CD8-positive, alpha-beta T cell (primary cell): ENCODE measurements at regions of chr1 and their contacts with region 1.

Region 1: GRCh38 chr1:226736908-226737818 is 1.9 kb downstream of the ITPKB start:
- DNase-seq: peak in 8 of 9 experiments; percentile 26 to 77 (median 61)
- ATAC-seq: peak; percentile 14
- H3K4me3 ChIP-seq: peak overlapping the region; percentile 99
- H3K4me3 Mint-ChIP-seq: peak overlapping the region; percentile 94
- H3K27ac ChIP-seq: peak overlapping the region; percentile 88 to 98
- H3K27ac Mint-ChIP-seq: peak overlapping the region; percentile 94
- H3K4me1 ChIP-seq: peaks cover 36% of the 10 kb centered on the region
- H3K4me1 Mint-ChIP-seq: peaks cover 44% of the 10 kb centered on the region
- H3K27me3 ChIP-seq: no peaks in the 10 kb centered on the region
- H3K27me3 Mint-ChIP-seq: no peaks in the 10 kb centered on the region
- CTCF ChIP-seq: no peak

Region 2: GRCh38 chr1:226308723-226309315 is 428.3 kb before region 1 on chr1 and contains the start of gene LIN9:
- CTCF ChIA-PET with region 1: no interaction called
- POLR2A ChIA-PET with region 1: no interaction called
- intact Hi-C with region 1: loop called in 1 of 2 experiments (anchors 5 kb)
- DNase-seq: peak; percentile 82 to 94 (median 91)
- ATAC-seq: peak; percentile 90
- H3K4me3 ChIP-seq: peak within 1 kb of the TSS; percentile 91 to 99
- H3K4me3 Mint-ChIP-seq: peak within 1 kb of the TSS; percentile 95
- H3K27ac ChIP-seq: peak within 1 kb of the TSS; percentile 49 to 56
- H3K27ac Mint-ChIP-seq: peak within 1 kb of the TSS; percentile 86
- H3K4me1 ChIP-seq: peaks cover 14% of the 10 kb centered on the region
- H3K4me1 Mint-ChIP-seq: peaks cover 22% of the 10 kb centered on the region
- H3K27me3 ChIP-seq: peaks cover 0 to 8% of the 10 kb centered on the region in 2 experiments
- H3K27me3 Mint-ChIP-seq: peaks cover 8% of the 10 kb centered on the region
- CTCF ChIP-seq: no peak
- total RNA-seq, gene LIN9: 1.1 to 1.3 TPM

Region 3: GRCh38 chr1:226642876-226643576 is 94.1 kb before region 1 on chr1:
- CTCF ChIA-PET with region 1: interaction called, 3 read pairs
- POLR2A ChIA-PET with region 1: interaction called, 10 read pairs
- intact Hi-C with region 1: no loop called
- DNase-seq: peak in 6 of 9 experiments; percentile 49 to 73 (median 66)
- ATAC-seq: peak; percentile 76
- H3K4me3 ChIP-seq: no peak overlapping the region
- H3K4me3 Mint-ChIP-seq: peak overlapping the region; percentile 54
- H3K27ac ChIP-seq: peak overlapping the region; percentile 27 to 34
- H3K27ac Mint-ChIP-seq: peak overlapping the region; percentile 89
- H3K4me1 ChIP-seq: peaks cover 57% of the 10 kb centered on the region
- H3K4me1 Mint-ChIP-seq: peaks cover 55% of the 10 kb centered on the region
- H3K27me3 ChIP-seq: no peaks in the 10 kb centered on the region
- H3K27me3 Mint-ChIP-seq: no peaks in the 10 kb centered on the region
- CTCF ChIP-seq: no peak

Region 4: GRCh38 chr1:226662642-226663326 is 74.4 kb before region 1 on chr1:
- CTCF ChIA-PET with region 1: interaction called, 3 read pairs
- POLR2A ChIA-PET with region 1: interaction called, 5 read pairs
- intact Hi-C with region 1: loop called in 1 of 2 experiments (anchors 2 kb)
- DNase-seq: peak; percentile 69 to 99 (median 85)
- ATAC-seq: peak; percentile 83
- H3K4me3 ChIP-seq: peak overlapping the region; percentile 1 to 13
- H3K4me3 Mint-ChIP-seq: peak overlapping the region; percentile 59
- H3K27ac ChIP-seq: peak overlapping the region in 1 of 2 experiments; percentile 65
- H3K27ac Mint-ChIP-seq: no peak overlapping the region
- H3K4me1 ChIP-seq: no peaks in the 10 kb centered on the region
- H3K4me1 Mint-ChIP-seq: peaks cover 89% of the 10 kb centered on the region
- H3K27me3 ChIP-seq: no peaks in the 10 kb centered on the region
- H3K27me3 Mint-ChIP-seq: no peaks in the 10 kb centered on the region
- CTCF ChIP-seq: no peak

Region 5: GRCh38 chr1:226711976-226712741 is 25.0 kb before region 1 on chr1:
- CTCF ChIA-PET with region 1: interaction called, 7 read pairs
- POLR2A ChIA-PET with region 1: interaction called, 12 read pairs
- intact Hi-C with region 1: loop called in 1 of 2 experiments (anchors 1 kb)
- DNase-seq: peak in 8 of 9 experiments; percentile 40 to 83 (median 67)
- ATAC-seq: peak; percentile 55
- H3K4me3 ChIP-seq: peak overlapping the region; percentile 21 to 36
- H3K4me3 Mint-ChIP-seq: peak overlapping the region; percentile 65
- H3K27ac ChIP-seq: peak overlapping the region; percentile 35 to 76
- H3K27ac Mint-ChIP-seq: peak overlapping the region; percentile 93
- H3K4me1 ChIP-seq: peaks cover 96% of the 10 kb centered on the region
- H3K4me1 Mint-ChIP-seq: peaks cover 98% of the 10 kb centered on the region
- H3K27me3 ChIP-seq: no peaks in the 10 kb centered on the region
- H3K27me3 Mint-ChIP-seq: no peaks in the 10 kb centered on the region
- CTCF ChIP-seq: no peak

Region 6: DNA sequence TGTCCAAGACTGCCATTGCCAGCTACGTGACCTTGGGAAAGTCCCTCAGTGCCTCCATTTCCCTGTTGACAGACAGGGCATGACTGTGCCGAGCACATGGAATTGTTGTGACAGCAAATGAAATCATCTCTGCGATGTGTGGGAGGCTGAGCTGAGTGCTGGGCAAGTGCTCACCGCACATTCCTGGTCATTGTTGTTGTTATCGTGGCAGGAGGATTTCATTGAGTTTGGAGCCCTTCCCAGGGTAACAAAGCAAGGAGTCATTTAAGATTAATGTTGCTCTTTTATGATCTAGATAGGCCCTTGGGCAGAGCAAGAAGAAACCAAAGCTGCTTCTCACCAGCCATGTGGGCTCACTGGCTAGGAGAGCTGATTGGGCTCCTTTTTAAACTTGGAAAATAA is 41.5 kb after region 1 on chr1:
- CTCF ChIA-PET with region 1: interaction called, 3 read pairs
- POLR2A ChIA-PET with region 1: no interaction called
- intact Hi-C with region 1: loop called in 1 of 2 experiments (anchors 5 kb)
- DNase-seq: no peak
- ATAC-seq: no peak
- H3K4me3 ChIP-seq: no peak overlapping the region
- H3K4me3 Mint-ChIP-seq: no peak overlapping the region
- H3K27ac ChIP-seq: no peak overlapping the region
- H3K27ac Mint-ChIP-seq: no peak overlapping the region
- H3K4me1 ChIP-seq: peaks cover 4% of the 10 kb centered on the region
- H3K4me1 Mint-ChIP-seq: peaks cover 4% of the 10 kb centered on the region
- H3K27me3 ChIP-seq: no peaks in the 10 kb centered on the region
- H3K27me3 Mint-ChIP-seq: no peaks in the 10 kb centered on the region
- CTCF ChIP-seq: no peak

Region 7: GRCh38 chr1:226940029-226940805 is 203.1 kb after region 1 on chr1 and contains the start of gene COQ8A:
- CTCF ChIA-PET with region 1: no interaction called
- POLR2A ChIA-PET with region 1: interaction called, 6 read pairs
- intact Hi-C with region 1: loop called (anchors 10 kb)
- DNase-seq: peak; percentile 97 to 100 (median 99)
- ATAC-seq: peak; percentile 90
- H3K4me3 ChIP-seq: peak within 1 kb of the TSS; percentile 92 to 93
- H3K4me3 Mint-ChIP-seq: peak within 1 kb of the TSS; percentile 88
- H3K27ac ChIP-seq: peak within 1 kb of the TSS; percentile 93 to 97
- H3K27ac Mint-ChIP-seq: peak within 1 kb of the TSS; percentile 97
- H3K4me1 ChIP-seq: peaks cover 38% of the 10 kb centered on the region
- H3K4me1 Mint-ChIP-seq: peaks cover 49% of the 10 kb centered on the region
- H3K27me3 ChIP-seq: no peaks in the 10 kb centered on the region
- H3K27me3 Mint-ChIP-seq: no peaks in the 10 kb centered on the region
- CTCF ChIP-seq: no peak
- total RNA-seq, gene COQ8A: 82.6 to 90.0 TPM

Region 8: GRCh38 chr1:227166559-227166958 is 429.4 kb after region 1 on chr1:
- CTCF ChIA-PET with region 1: no interaction called
- POLR2A ChIA-PET with region 1: no interaction called
- intact Hi-C with region 1: no loop called
- DNase-seq: no peak
- ATAC-seq: no peak
- H3K4me3 ChIP-seq: no peak overlapping the region
- H3K4me3 Mint-ChIP-seq: no peak overlapping the region
- H3K27ac ChIP-seq: no peak overlapping the region
- H3K27ac Mint-ChIP-seq: no peak overlapping the region
- H3K4me1 ChIP-seq: no peaks in the 10 kb centered on the region
- H3K4me1 Mint-ChIP-seq: no peaks in the 10 kb centered on the region
- H3K27me3 ChIP-seq: no peaks in the 10 kb centered on the region
- H3K27me3 Mint-ChIP-seq: peaks cover 9% of the 10 kb centered on the region
- CTCF ChIP-seq: no peak